CD4-positive, alpha-beta memory T cell (primary cell): ENCODE measurements at regions of chr2 and their contacts with region 1.

Region 1: GRCh38 chr2:219278655-219279516 is at the start of gene DNAJB2:
- DNase-seq: peak; percentile 98 to 100 (median 99)
- H3K4me3 ChIP-seq: peak within 1 kb of the TSS; percentile 48 to 71
- H3K4me3 Mint-ChIP-seq: peak within 1 kb of the TSS; percentile 88 to 98 (median 96)
- H3K27ac ChIP-seq: peak within 1 kb of the TSS; percentile 98
- H3K27ac Mint-ChIP-seq: peak within 1 kb of the TSS; percentile 96 to 100 (median 100)
- H3K4me1 ChIP-seq: peaks cover 40% of the 10 kb centered on the region
- H3K4me1 Mint-ChIP-seq: peaks cover 17 to 51% (median 40%) of the 10 kb centered on the region in 4 donors
- H3K27me3 ChIP-seq: no peaks in the 10 kb centered on the region
- H3K27me3 Mint-ChIP-seq: no peaks in the 10 kb centered on the region
- total RNA-seq, gene DNAJB2: 110 to 117 TPM

Region 2: GRCh38 chr2:218892693-218893348 is 386.1 kb before region 1 on chr2:
- CTCF ChIA-PET with region 1: no interaction called
- POLR2A ChIA-PET with region 1: no interaction called
- intact Hi-C with region 1: loop called (anchors 10 kb)
- DNase-seq: peak; percentile 89 to 96 (median 92)
- H3K4me3 ChIP-seq: peak overlapping the region; percentile 9 to 61
- H3K4me3 Mint-ChIP-seq: peak overlapping the region; percentile 76 to 87 (median 80)
- H3K27ac ChIP-seq: peak overlapping the region; percentile 93
- H3K27ac Mint-ChIP-seq: peak overlapping the region; percentile 94 to 99 (median 98)
- H3K4me1 ChIP-seq: peaks cover 66% of the 10 kb centered on the region
- H3K4me1 Mint-ChIP-seq: peaks cover 40 to 76% (median 50%) of the 10 kb centered on the region in 4 donors
- H3K27me3 ChIP-seq: no peaks in the 10 kb centered on the region
- H3K27me3 Mint-ChIP-seq: no peaks in the 10 kb centered on the region

Region 3: GRCh38 chr2:219206442-219207253 is 72.2 kb before region 1 on chr2 and contains the start of gene ZFAND2B:
- CTCF ChIA-PET with region 1: interaction called, 33 read pairs
- POLR2A ChIA-PET with region 1: interaction called, 35 read pairs
- intact Hi-C with region 1: loop called (anchors 1 kb)
- DNase-seq: peak; percentile 93 to 98 (median 95)
- H3K4me3 ChIP-seq: peak within 1 kb of the TSS; percentile 67 to 88
- H3K4me3 Mint-ChIP-seq: peak within 1 kb of the TSS; percentile 88 to 95 (median 94)
- H3K27ac ChIP-seq: peak within 1 kb of the TSS; percentile 87
- H3K27ac Mint-ChIP-seq: peak within 1 kb of the TSS; percentile 93 to 98 (median 97)
- H3K4me1 ChIP-seq: peaks cover 39% of the 10 kb centered on the region
- H3K4me1 Mint-ChIP-seq: peaks cover 22 to 54% (median 37%) of the 10 kb centered on the region in 4 donors
- H3K27me3 ChIP-seq: no peaks in the 10 kb centered on the region
- H3K27me3 Mint-ChIP-seq: no peaks in the 10 kb centered on the region
- total RNA-seq, gene ZFAND2B: 73.3 to 79.8 TPM

Region 4: GRCh38 chr2:219229305-219230058 is 49.4 kb before region 1 on chr2 and contains the starts of genes ANKZF1 and ATG9A:
- CTCF ChIA-PET with region 1: interaction called, 13 read pairs
- POLR2A ChIA-PET with region 1: interaction called, 64 read pairs
- intact Hi-C with region 1: loop called (anchors 1 kb)
- DNase-seq: peak; percentile 98 to 100 (median 99)
- H3K4me3 ChIP-seq: peak within 1 kb of the TSS; percentile 63 to 69
- H3K4me3 Mint-ChIP-seq: peak within 1 kb of the TSS; percentile 94 to 99 (median 96)
- H3K27ac ChIP-seq: peak within 1 kb of the TSS; percentile 87
- H3K27ac Mint-ChIP-seq: peak within 1 kb of the TSS; percentile 94 to 98 (median 96)
- H3K4me1 ChIP-seq: peaks cover 49% of the 10 kb centered on the region
- H3K4me1 Mint-ChIP-seq: peaks cover 28 to 82% (median 51%) of the 10 kb centered on the region in 4 donors
- H3K27me3 ChIP-seq: no peaks in the 10 kb centered on the region
- H3K27me3 Mint-ChIP-seq: no peaks in the 10 kb centered on the region
- total RNA-seq, gene ANKZF1: 244 to 260 TPM
- total RNA-seq, gene ATG9A: 48.7 to 53.0 TPM

Region 5: GRCh38 chr2:219253753-219254590 is 24.9 kb before region 1 on chr2 and contains the start of gene TUBA4A:
- CTCF ChIA-PET with region 1: interaction called, 118 read pairs
- POLR2A ChIA-PET with region 1: interaction called, 338 read pairs
- intact Hi-C with region 1: loop called (anchors 1 kb)
- DNase-seq: peak; percentile 89 to 90 (median 90)
- H3K4me3 ChIP-seq: peak within 1 kb of the TSS; percentile 94 to 100
- H3K4me3 Mint-ChIP-seq: peak within 1 kb of the TSS; percentile 85 to 99 (median 94)
- H3K27ac ChIP-seq: peak within 1 kb of the TSS; percentile 87
- H3K27ac Mint-ChIP-seq: peak within 1 kb of the TSS; percentile 92 to 98 (median 97)
- H3K4me1 ChIP-seq: peaks cover 42% of the 10 kb centered on the region
- H3K4me1 Mint-ChIP-seq: peaks cover 34 to 60% (median 45%) of the 10 kb centered on the region in 4 donors
- H3K27me3 ChIP-seq: no peaks in the 10 kb centered on the region
- H3K27me3 Mint-ChIP-seq: no peaks in the 10 kb centered on the region
- total RNA-seq, gene TUBA4A: 242 to 259 TPM

Region 6: GRCh38 chr2:219300022-219300421 is 21.1 kb after region 1 on chr2:
- CTCF ChIA-PET with region 1: interaction called, 208 read pairs
- POLR2A ChIA-PET with region 1: interaction called, 119 read pairs
- intact Hi-C with region 1: loop called (anchors 1 kb)
- DNase-seq: no peak
- H3K4me3 ChIP-seq: no peak overlapping the region
- H3K4me3 Mint-ChIP-seq: no peak overlapping the region
- H3K27ac ChIP-seq: no peak overlapping the region
- H3K27ac Mint-ChIP-seq: peak overlapping the region in 1 of 7 donors; percentile 7
- H3K4me1 ChIP-seq: peaks cover 5% of the 10 kb centered on the region
- H3K4me1 Mint-ChIP-seq: peaks cover 4 to 20% (median 9%) of the 10 kb centered on the region in 4 donors
- H3K27me3 ChIP-seq: no peaks in the 10 kb centered on the region
- H3K27me3 Mint-ChIP-seq: peaks cover 21 to 25% of the 10 kb centered on the region in 2 donors

Region 7: GRCh38 chr2:219543601-219544358 is 264.9 kb after region 1 on chr2 and contains the starts of genes CHPF and TMEM198:
- CTCF ChIA-PET with region 1: no interaction called
- POLR2A ChIA-PET with region 1: no interaction called
- intact Hi-C with region 1: loop called (anchors 5 kb)
- DNase-seq: peak; percentile 90 to 95 (median 91)
- H3K4me3 ChIP-seq: peak within 1 kb of the TSS; percentile 29 to 75
- H3K4me3 Mint-ChIP-seq: peak within 1 kb of the TSS; percentile 84 to 92 (median 90)
- H3K27ac ChIP-seq: peak within 1 kb of the TSS; percentile 62
- H3K27ac Mint-ChIP-seq: peak within 1 kb of the TSS; percentile 84 to 93 (median 92)
- H3K4me1 ChIP-seq: peaks cover 21% of the 10 kb centered on the region
- H3K4me1 Mint-ChIP-seq: peaks cover 15 to 34% (median 23%) of the 10 kb centered on the region in 4 donors
- H3K27me3 ChIP-seq: no peaks in the 10 kb centered on the region
- H3K27me3 Mint-ChIP-seq: peaks cover 7 to 10% of the 10 kb centered on the region in 2 donors
- total RNA-seq, gene CHPF: 7.7 to 8.5 TPM
- total RNA-seq, gene TMEM198: 0.67 to 0.76 TPM